ENCODE measurements at regions of chr5 and their contacts with region 1.

Region 1: GRCh38 chr5:42950440-42951292 is 89.5 kb downstream of the ANXA2R start:
- DNase-seq: peak; percentile 98
- H3K4me3 ChIP-seq: peak overlapping the region; percentile 27 to 38 (median 33)
- H3K27ac ChIP-seq: peak overlapping the region; percentile 78
- H3K4me1 ChIP-seq: peaks cover 13% of the 10 kb centered on the region
- H3K27me3 ChIP-seq: no peaks in the 10 kb centered on the region
- CTCF ChIP-seq: no peak

Region 2: GRCh38 chr5:42915306-42915866 is 35.3 kb before region 1 on chr5:
- CTCF ChIA-PET with region 1: no interaction called
- dilution Hi-C with region 1: no loop called
- in situ Hi-C with region 1: no loop called
- intact Hi-C with region 1: no loop called
- DNase-seq: no peak
- H3K4me3 ChIP-seq: no peak overlapping the region
- H3K27ac ChIP-seq: no peak overlapping the region
- H3K4me1 ChIP-seq: no peaks in the 10 kb centered on the region
- H3K27me3 ChIP-seq: no peaks in the 10 kb centered on the region
- CTCF ChIP-seq: no peak

Region 3: DNA sequence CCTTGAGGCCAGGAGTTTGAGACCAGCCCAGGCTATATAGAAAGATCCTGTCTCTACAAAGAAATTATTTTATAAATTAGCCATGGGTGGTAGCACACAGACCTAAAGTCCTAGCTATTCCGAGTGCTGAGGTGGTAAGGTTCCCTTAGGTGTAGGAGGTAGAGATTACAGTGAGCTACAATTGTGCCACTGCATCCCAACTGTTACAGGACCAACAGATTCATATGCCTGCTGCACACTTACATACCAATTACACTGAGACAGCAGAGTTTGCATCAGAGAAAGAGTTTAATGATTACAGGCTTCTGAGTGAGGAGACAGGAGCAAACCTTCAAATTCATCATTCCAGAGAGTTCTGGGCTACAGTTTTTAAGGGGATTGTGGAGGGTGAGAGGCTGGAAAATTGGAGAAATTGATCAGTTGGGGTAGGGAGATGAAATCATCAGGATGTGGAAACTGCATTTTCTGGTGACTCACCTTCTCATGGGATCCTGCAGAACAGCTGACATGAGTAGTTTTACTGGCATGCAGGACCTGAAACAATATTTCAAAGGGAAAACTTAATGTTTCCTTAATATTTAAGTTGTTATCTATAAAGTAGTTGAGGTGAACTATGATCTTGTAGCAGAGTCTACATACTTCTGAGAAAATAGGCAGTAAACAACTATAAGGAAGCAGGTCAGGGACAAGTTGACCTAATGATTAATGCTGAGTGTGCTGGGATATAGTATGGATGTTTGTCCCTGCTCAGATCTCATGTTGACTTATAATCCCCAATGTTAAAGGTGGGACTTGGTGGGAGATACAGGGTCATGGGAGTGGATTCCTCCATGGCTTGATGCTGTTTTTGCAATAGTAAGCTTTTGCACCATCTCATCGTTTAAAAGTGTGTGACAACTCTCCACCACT is 34.7 kb after region 1 on chr5:
- CTCF ChIA-PET with region 1: no interaction called
- dilution Hi-C with region 1: no loop called
- in situ Hi-C with region 1: no loop called
- intact Hi-C with region 1: loop called (anchors 2 kb)
- DNase-seq: peak; percentile 80
- H3K4me3 ChIP-seq: no peak overlapping the region
- H3K27ac ChIP-seq: peak overlapping the region; percentile 86
- H3K4me1 ChIP-seq: peaks cover 32% of the 10 kb centered on the region
- H3K27me3 ChIP-seq: no peaks in the 10 kb centered on the region
- CTCF ChIP-seq: no peak

Region 4: DNA sequence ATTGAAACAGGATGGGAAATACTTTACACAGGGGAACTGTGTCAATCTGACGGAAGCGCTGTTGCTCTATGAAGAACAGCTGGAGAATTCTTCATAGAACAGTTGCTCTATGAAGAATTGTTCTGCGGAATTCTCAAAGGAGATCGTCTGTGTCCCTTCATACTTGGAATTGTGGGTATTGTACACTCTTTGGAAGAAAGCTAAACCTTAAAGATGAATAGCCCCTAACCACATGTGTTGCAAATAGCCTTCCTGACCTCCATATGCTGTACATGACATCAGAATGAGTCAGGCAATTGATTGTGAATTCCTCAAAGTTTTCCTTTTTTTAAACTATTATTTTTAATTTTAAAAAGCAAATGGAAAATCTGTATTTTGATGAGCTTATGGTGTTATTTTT is 256.9 kb after region 1 on chr5:
- CTCF ChIA-PET with region 1: no interaction called
- dilution Hi-C with region 1: no loop called
- in situ Hi-C with region 1: no loop called
- intact Hi-C with region 1: no loop called
- DNase-seq: no peak
- H3K4me3 ChIP-seq: no peak overlapping the region
- H3K27ac ChIP-seq: no peak overlapping the region
- H3K4me1 ChIP-seq: peaks cover 14% of the 10 kb centered on the region
- H3K27me3 ChIP-seq: no peaks in the 10 kb centered on the region
- CTCF ChIP-seq: no peak

Measured in mammary epithelial cell (primary cell).